ENCODE measurements at regions of chr1 and their contacts with region 1.

Region 1: DNA sequence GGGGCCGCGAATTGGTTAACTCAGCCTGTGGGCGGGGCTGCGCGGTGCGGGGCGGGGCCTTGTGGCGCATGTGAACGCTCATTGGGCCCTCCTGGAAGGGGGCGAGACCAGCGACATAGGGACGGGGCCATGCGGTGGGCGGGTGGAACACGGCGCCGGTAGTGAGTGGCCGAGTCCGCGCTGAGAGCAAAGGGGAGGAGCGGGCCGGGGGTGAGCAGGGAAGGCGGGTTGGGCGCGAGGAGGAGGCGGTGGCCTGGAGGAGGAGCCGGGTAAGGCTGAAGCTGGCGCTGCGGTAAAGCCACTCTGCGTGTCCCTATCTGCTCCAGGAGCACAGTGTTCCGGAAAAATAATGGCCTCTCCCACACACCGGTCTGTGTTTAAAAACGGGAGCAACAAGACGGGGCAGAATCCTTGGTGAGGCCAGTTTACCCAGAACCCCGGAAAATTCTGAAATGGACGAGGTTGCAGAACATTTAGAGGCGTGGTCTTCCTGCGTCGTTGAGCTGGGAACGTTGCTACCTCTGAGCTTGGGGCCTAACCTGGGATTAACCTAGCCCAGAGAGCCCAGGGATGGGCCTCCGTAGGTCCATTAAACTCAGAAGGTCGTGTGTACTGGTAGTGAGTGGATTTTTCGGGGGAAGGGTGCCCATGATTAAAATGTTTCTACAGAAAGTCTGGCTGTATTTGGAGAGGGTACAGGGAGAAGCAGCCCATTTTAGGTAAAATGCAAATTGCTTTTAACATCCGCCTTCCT is 533 bp upstream of the CTNNBIP1 start:
- DNase-seq: peak; percentile 99 to 100 (median 100)
- ATAC-seq: peak; percentile 95
- H3K4me3 ChIP-seq: peak overlapping the region; percentile 89
- H3K4me3 Mint-ChIP-seq: peak overlapping the region; percentile 88 to 98 (median 96)
- H3K27ac ChIP-seq: peak overlapping the region; percentile 75
- H3K27ac Mint-ChIP-seq: peak overlapping the region; percentile 84 to 98 (median 97)
- H3K4me1 ChIP-seq: peaks cover 13 to 15% of the 10 kb centered on the region in 2 donors
- H3K4me1 Mint-ChIP-seq: peaks cover 25 to 43% (median 31%) of the 10 kb centered on the region in 7 donors
- H3K27me3 ChIP-seq: no peaks in the 10 kb centered on the region
- H3K27me3 Mint-ChIP-seq: peaks cover 0 to 10% (median 0%) of the 10 kb centered on the region in 5 donors

Region 2: GRCh38 chr1:9128520-9129265 is 781.9 kb before region 1 on chr1 and contains the start of gene GPR157:
- CTCF ChIA-PET with region 1: no interaction called
- POLR2A ChIA-PET with region 1: no interaction called
- intact Hi-C with region 1: loop called in 1 of 2 experiments (anchors 1 kb)
- DNase-seq: peak; percentile 53 to 82 (median 70)
- ATAC-seq: peak; percentile 95
- H3K4me3 ChIP-seq: peak within 1 kb of the TSS; percentile 67
- H3K4me3 Mint-ChIP-seq: peak within 1 kb of the TSS; percentile 85 to 95 (median 90)
- H3K27ac ChIP-seq: peak within 1 kb of the TSS; percentile 67
- H3K27ac Mint-ChIP-seq: peak within 1 kb of the TSS; percentile 59 to 94 (median 87)
- H3K4me1 ChIP-seq: peaks cover 8 to 24% of the 10 kb centered on the region in 2 donors
- H3K4me1 Mint-ChIP-seq: peaks cover 19 to 40% (median 32%) of the 10 kb centered on the region in 7 donors
- H3K27me3 ChIP-seq: no peaks in the 10 kb centered on the region
- H3K27me3 Mint-ChIP-seq: peaks cover 0 to 25% (median 0%) of the 10 kb centered on the region in 5 donors
- total RNA-seq, gene GPR157: 4.0 to 14.1 (median 5.9) TPM

Region 3: DNA sequence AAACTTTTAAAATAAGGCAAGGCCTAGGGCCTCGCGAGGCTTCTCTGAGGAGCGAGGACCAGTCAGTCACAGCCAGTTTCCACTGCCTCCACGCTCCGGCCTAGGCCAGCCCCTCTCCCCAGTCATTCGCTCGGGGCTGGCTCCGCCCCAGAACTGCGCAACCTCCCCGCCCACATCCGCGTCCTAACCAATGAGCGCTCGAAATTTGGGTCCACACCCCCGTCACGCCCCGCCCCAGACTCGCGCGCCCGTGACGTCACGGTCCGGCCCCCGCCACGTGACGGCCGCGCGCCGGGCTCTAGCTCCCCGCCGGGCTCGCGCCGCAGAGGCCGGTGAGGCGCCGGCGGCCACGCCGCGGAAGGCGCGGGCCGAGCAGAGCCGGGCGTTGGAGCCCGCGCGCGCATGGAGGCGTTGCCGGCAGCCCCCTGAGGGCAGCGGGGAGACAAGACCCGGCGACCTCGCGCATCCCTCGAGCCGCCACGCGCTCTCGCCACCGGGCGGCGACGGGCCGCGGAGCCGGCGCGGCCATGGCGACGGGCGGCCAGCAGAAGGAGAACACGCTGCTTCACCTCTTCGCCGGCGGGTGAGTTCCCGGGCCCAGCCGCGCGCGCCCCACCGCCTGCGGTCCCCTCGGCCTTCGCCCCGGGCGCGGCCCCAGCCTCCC is 371.3 kb before region 1 on chr1 and contains the start of gene SLC25A33:
- CTCF ChIA-PET with region 1: no interaction called
- POLR2A ChIA-PET with region 1: no interaction called
- intact Hi-C with region 1: loop called (anchors 1 kb)
- DNase-seq: peak; percentile 92 to 99 (median 95)
- ATAC-seq: peak; percentile 99
- H3K4me3 ChIP-seq: peak within 1 kb of the TSS; percentile 58
- H3K4me3 Mint-ChIP-seq: peak within 1 kb of the TSS; percentile 86 to 93 (median 90)
- H3K27ac ChIP-seq: peak within 1 kb of the TSS; percentile 73
- H3K27ac Mint-ChIP-seq: peak within 1 kb of the TSS; percentile 85 to 97 (median 91)
- H3K4me1 ChIP-seq: peaks cover 5 to 8% of the 10 kb centered on the region in 2 donors
- H3K4me1 Mint-ChIP-seq: peaks cover 18 to 38% (median 31%) of the 10 kb centered on the region in 7 donors
- H3K27me3 ChIP-seq: no peaks in the 10 kb centered on the region
- H3K27me3 Mint-ChIP-seq: no peaks in the 10 kb centered on the region
- total RNA-seq, gene SLC25A33: 2.5 to 5.8 (median 3.9) TPM

Region 4: GRCh38 chr1:9689011-9689706 is 221.4 kb before region 1 on chr1:
- CTCF ChIA-PET with region 1: no interaction called
- POLR2A ChIA-PET with region 1: no interaction called
- intact Hi-C with region 1: loop called in 1 of 2 experiments (anchors 1 kb)
- DNase-seq: peak; percentile 62 to 89 (median 82)
- ATAC-seq: peak; percentile 93
- H3K4me3 ChIP-seq: peak overlapping the region; percentile 50
- H3K4me3 Mint-ChIP-seq: peak overlapping the region; percentile 80 to 90 (median 87)
- H3K27ac ChIP-seq: peak overlapping the region; percentile 70
- H3K27ac Mint-ChIP-seq: peak overlapping the region in 8 of 9 donors; percentile 59 to 90 (median 78)
- H3K4me1 ChIP-seq: peaks cover 53 to 59% of the 10 kb centered on the region in 2 donors
- H3K4me1 Mint-ChIP-seq: peaks cover 36 to 85% (median 73%) of the 10 kb centered on the region in 7 donors
- H3K27me3 ChIP-seq: no peaks in the 10 kb centered on the region
- H3K27me3 Mint-ChIP-seq: no peaks in the 10 kb centered on the region

Region 5: GRCh38 chr1:9874959-9875635 is 35.5 kb before region 1 on chr1:
- CTCF ChIA-PET with region 1: interaction called, 7 read pairs
- POLR2A ChIA-PET with region 1: no interaction called
- intact Hi-C with region 1: loop called (anchors 1 kb)
- DNase-seq: peak; percentile 54 to 73 (median 64)
- ATAC-seq: peak; percentile 93
- H3K4me3 ChIP-seq: no peak overlapping the region
- H3K4me3 Mint-ChIP-seq: peak overlapping the region in 1 of 10 donors; percentile 14
- H3K27ac ChIP-seq: no peak overlapping the region
- H3K27ac Mint-ChIP-seq: peak overlapping the region in 3 of 9 donors; percentile 16 to 23 (median 16)
- H3K4me1 ChIP-seq: no peaks in the 10 kb centered on the region
- H3K4me1 Mint-ChIP-seq: peaks cover 6 to 9% (median 7%) of the 10 kb centered on the region in 7 donors
- H3K27me3 ChIP-seq: no peaks in the 10 kb centered on the region
- H3K27me3 Mint-ChIP-seq: no peaks in the 10 kb centered on the region

Region 6: GRCh38 chr1:10398734-10399623 is 488.4 kb after region 1 on chr1 and contains the start of gene PGD:
- CTCF ChIA-PET with region 1: no interaction called
- POLR2A ChIA-PET with region 1: no interaction called
- intact Hi-C with region 1: loop called in 1 of 2 experiments (anchors 1 kb)
- DNase-seq: peak; percentile 87 to 98 (median 94)
- ATAC-seq: peak; percentile 99
- H3K4me3 ChIP-seq: peak within 1 kb of the TSS; percentile 95
- H3K4me3 Mint-ChIP-seq: peak within 1 kb of the TSS; percentile 87 to 97 (median 96)
- H3K27ac ChIP-seq: peak within 1 kb of the TSS; percentile 86
- H3K27ac Mint-ChIP-seq: peak within 1 kb of the TSS; percentile 63 to 94 (median 82)
- H3K4me1 ChIP-seq: peaks cover 4 to 7% of the 10 kb centered on the region in 2 donors
- H3K4me1 Mint-ChIP-seq: peaks cover 10 to 30% (median 25%) of the 10 kb centered on the region in 7 donors
- H3K27me3 ChIP-seq: no peaks in the 10 kb centered on the region
- H3K27me3 Mint-ChIP-seq: no peaks in the 10 kb centered on the region
- total RNA-seq, gene PGD: 42.0 to 110 (median 48.5) TPM

Region 7: DNA sequence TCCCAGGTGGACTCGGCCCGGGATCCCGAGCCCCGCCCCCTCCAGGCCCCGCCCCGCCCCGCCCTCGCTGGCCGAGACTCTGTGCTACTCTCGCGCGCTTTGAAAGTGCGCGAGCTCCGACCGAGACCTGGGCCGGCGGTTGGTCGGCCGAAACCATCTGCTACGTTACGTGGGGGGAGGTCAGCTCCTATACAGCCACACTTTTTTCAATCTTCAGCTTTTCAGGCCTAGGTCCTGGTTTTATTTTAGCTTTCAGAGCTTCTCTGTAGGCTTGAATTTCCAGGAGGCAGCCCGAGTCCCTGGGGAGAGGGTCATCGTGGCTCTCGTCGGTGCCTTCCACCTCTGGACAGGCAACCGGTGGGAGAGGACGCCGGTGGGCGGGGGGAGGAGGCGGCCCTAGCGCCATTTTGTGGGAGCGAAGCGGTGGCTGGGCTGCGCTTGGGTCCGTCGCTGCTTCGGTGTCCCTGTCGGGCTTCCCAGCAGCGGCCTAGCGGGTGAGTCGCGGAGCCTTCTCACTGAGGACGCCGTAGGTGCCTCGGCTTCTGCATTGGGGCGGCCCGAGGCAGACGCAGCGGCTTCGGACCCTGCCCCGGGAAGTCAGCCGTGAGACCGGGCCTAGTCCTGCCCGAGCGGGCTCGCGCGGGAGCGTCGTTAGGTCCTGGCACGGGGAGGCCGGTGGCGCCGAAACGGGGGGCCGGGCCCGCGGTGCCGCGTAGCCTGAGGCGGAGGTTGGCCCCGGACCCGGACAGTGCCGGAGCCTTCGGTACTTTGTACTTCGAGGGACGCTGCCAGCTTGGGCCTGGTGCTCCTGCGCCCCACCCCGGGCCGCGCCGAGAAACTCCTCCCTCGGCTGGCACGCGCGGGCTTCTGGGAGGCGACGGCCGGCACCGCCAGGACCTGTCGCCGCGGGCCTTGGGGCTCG is 1101.9 kb after region 1 on chr1 and contains the start of gene TARDBP:
- CTCF ChIA-PET with region 1: no interaction called
- POLR2A ChIA-PET with region 1: no interaction called
- intact Hi-C with region 1: loop called (anchors 5 to 10 kb)
- DNase-seq: peak; percentile 88 to 95 (median 93)
- ATAC-seq: peak; percentile 95
- H3K4me3 ChIP-seq: peak within 1 kb of the TSS; percentile 74
- H3K4me3 Mint-ChIP-seq: peak within 1 kb of the TSS; percentile 86 to 96 (median 93)
- H3K27ac ChIP-seq: peak within 1 kb of the TSS; percentile 94
- H3K27ac Mint-ChIP-seq: peak within 1 kb of the TSS; percentile 95 to 98 (median 98)
- H3K4me1 ChIP-seq: peaks cover 19 to 24% of the 10 kb centered on the region in 2 donors
- H3K4me1 Mint-ChIP-seq: peaks cover 15 to 36% (median 26%) of the 10 kb centered on the region in 7 donors
- H3K27me3 ChIP-seq: no peaks in the 10 kb centered on the region
- H3K27me3 Mint-ChIP-seq: no peaks in the 10 kb centered on the region
- total RNA-seq, gene TARDBP: 114 to 196 (median 174) TPM

Region 8: GRCh38 chr1:11174261-11174942 is 1263.8 kb after region 1 on chr1:
- CTCF ChIA-PET with region 1: no interaction called
- POLR2A ChIA-PET with region 1: no interaction called
- intact Hi-C with region 1: no loop called
- DNase-seq: no peak
- ATAC-seq: no peak
- H3K4me3 ChIP-seq: no peak overlapping the region
- H3K4me3 Mint-ChIP-seq: no peak overlapping the region
- H3K27ac ChIP-seq: no peak overlapping the region
- H3K27ac Mint-ChIP-seq: no peak overlapping the region
- H3K4me1 ChIP-seq: no peaks in the 10 kb centered on the region
- H3K4me1 Mint-ChIP-seq: no peaks in the 10 kb centered on the region
- H3K27me3 ChIP-seq: no peaks in the 10 kb centered on the region
- H3K27me3 Mint-ChIP-seq: no peaks in the 10 kb centered on the region

Measured in naive thymus-derived CD4-positive, alpha-beta T cell (primary cell).